ENCODE measurements at regions of chr3 and their contacts with region 1.

Region 1: GRCh38 chr3:134794950-134795745 is at the start of gene EPHB1:
- DNase-seq: peak; percentile 71
- H3K4me3 ChIP-seq: peak within 1 kb of the TSS; percentile 45
- H3K27ac ChIP-seq: no peak within 1 kb of the TSS
- H3K4me1 ChIP-seq: no peaks in the 10 kb centered on the region
- CTCF ChIP-seq: peak; percentile 90
- total RNA-seq, gene EPHB1: 0.33 and 0.54 TPM in 2 replicates

Region 2: GRCh38 chr3:134985864-134986715 is 190.9 kb after region 1 on chr3:
- CTCF ChIA-PET with region 1: no interaction called
- POLR2A ChIA-PET with region 1: no interaction called
- intact Hi-C with region 1: loop called (anchors 10 kb)
- DNase-seq: no peak
- H3K4me3 ChIP-seq: no peak overlapping the region
- H3K27ac ChIP-seq: no peak overlapping the region
- H3K4me1 ChIP-seq: no peaks in the 10 kb centered on the region
- CTCF ChIP-seq: no peak

Region 3: GRCh38 chr3:135503760-135504686 is 708.9 kb after region 1 on chr3:
- CTCF ChIA-PET with region 1: no interaction called
- POLR2A ChIA-PET with region 1: interaction called, 3 read pairs
- intact Hi-C with region 1: loop called (anchors 5 kb)
- DNase-seq: peak; percentile 25
- H3K4me3 ChIP-seq: no peak overlapping the region
- H3K27ac ChIP-seq: no peak overlapping the region
- H3K4me1 ChIP-seq: no peaks in the 10 kb centered on the region
- CTCF ChIP-seq: peak; percentile 76

Region 4: GRCh38 chr3:135895106-135895733 is 1100.1 kb after region 1 on chr3:
- CTCF ChIA-PET with region 1: no interaction called
- POLR2A ChIA-PET with region 1: no interaction called
- intact Hi-C with region 1: loop called (anchors 5 kb)
- DNase-seq: peak; percentile 53
- H3K4me3 ChIP-seq: no peak overlapping the region
- H3K27ac ChIP-seq: no peak overlapping the region
- H3K4me1 ChIP-seq: no peaks in the 10 kb centered on the region
- CTCF ChIP-seq: peak; percentile 97

Measured in OCI-LY7 (cell line).